HEK293 (cell line): ENCODE measurements at regions of chr20 and their contacts with region 1.

Region 1: DNA sequence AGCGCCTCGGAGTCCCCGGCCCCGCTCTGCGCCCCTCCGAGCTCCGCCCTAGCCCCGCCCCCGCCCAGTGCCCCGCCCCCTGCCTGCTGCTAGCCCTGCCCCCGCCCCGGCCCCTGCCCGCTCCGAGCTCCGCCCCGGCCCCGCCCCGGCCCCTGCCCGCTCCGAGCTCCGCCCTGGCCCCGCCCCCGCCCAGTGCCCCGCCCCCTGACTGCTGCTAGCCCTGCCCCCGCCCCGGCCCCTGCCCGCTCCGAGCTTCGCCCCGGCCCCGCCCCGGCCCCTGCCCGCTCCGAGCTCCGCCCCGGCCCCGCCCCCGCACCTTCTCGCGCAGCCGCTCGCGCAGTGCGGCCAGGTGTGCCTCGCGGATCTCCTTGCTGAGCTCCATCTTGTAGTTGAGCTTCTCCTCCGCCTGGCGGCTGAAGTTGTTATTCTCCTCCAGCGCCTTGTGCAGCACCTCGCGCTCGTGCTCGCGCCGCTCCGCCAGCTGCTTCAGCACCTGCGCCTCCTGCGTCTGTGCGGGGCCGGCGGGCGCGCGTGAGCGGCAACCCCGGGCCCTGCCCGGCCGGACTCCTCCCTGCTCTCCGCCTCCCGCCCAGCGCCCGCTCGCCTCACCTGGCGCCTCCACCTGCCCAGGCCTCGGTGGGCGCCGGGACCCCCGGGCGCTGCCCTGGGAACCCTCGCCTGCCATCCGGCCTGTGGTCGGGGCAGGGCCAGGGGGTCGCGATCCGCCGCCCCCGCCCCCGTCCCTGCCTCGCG is 11.3 kb downstream of the STMN3 start:
- H3K4me3 ChIP-seq: peak overlapping the region; percentile 32
- H3K27ac ChIP-seq: peak overlapping the region; percentile 64; the same call in 1 of the 2 replicates
- H3K4me1 ChIP-seq: peaks cover 3% of the 10 kb centered on the region; the same call in 1 of the 2 replicates
- CTCF ChIP-seq: peak; percentile 44

Region 2: GRCh38 chr20:63627129-63627750 is 14.7 kb before region 1 on chr20:
- CTCF ChIA-PET with region 1: no interaction called
- POLR2A ChIA-PET with region 1: interaction called, 20 read pairs
- H3K4me3 ChIP-seq: peak overlapping the region; percentile 89
- H3K27ac ChIP-seq: peak overlapping the region; percentile 98
- H3K4me1 ChIP-seq: no peaks in the 10 kb centered on the region
- CTCF ChIP-seq: peak; percentile 46; the same call in 1 of the 2 replicates

Region 3: GRCh38 chr20:63934271-63935068 is 292.5 kb after region 1 on chr20:
- CTCF ChIA-PET with region 1: no interaction called
- POLR2A ChIA-PET with region 1: no interaction called
- H3K4me3 ChIP-seq: no peak overlapping the region
- H3K27ac ChIP-seq: no peak overlapping the region
- H3K4me1 ChIP-seq: no peaks in the 10 kb centered on the region; the same call in 1 of the 2 replicates
- CTCF ChIP-seq: no peak